Right ventricle myocardium inferior (tissue), 1 donor: ENCODE measurements at regions of chr19 and their contacts with region 1.

Region 1: GRCh38 chr19:5891938-5892771 is 11.4 kb downstream of the NDUFA11 start:
- DNase-seq: no peak
- ATAC-seq: peak; percentile 61

Region 2: GRCh38 chr19:5803752-5804515 is 88.2 kb before region 1 on chr19:
- intact Hi-C with region 1: loop called (anchors 1 kb)
- DNase-seq: peak; percentile 92
- ATAC-seq: peak; percentile 87

Region 3: GRCh38 chr19:5913739-5914357 is 21.7 kb after region 1 on chr19 and contains the start of gene CAPS:
- intact Hi-C with region 1: no loop called
- DNase-seq: no peak
- ATAC-seq: peak; percentile 57
- total RNA-seq, gene CAPS: 3.8 TPM

Region 4: GRCh38 chr19:5947435-5947834 is 55.3 kb after region 1 on chr19:
- intact Hi-C with region 1: no loop called
- DNase-seq: peak; percentile 89
- ATAC-seq: peak; percentile 70